ENCODE measurements at regions of chr7 and their contacts with region 1.

Region 1: DNA sequence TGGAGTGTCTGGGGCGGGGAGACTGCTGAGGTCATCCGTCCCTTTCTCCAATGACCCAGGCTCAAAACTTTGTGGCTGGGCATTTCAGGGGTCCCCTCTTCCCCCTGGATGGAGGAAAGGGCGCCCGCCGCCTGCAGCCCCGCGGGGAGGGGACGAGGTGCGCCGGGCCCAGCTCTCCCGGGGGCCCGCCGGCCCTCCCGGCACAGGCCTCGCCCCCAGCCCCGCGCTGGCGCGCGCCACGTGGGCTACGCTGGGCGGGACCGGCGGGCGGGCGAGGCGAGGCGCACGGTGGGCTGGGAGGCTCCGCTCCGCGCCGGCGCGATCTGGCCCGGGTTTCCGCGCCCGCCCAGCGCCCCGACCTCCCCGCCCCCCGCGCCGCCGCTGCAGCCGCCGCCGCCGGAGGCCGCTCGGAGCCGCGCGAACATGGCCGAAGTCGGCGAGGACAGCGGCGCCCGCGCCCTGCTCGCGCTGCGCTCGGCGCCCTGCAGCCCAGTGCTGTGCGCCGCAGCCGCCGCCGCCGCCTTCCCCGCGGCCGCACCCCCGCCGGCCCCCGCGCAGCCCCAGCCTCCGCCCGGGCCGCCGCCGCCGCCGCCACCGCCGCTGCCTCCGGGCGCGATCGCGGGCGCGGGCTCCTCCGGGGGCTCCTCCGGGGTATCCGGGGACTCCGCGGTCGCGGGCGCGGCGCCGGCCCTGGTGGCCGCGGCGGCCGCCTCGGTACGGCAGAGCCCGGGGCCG is at the start of gene FOXK1:
- DNase-seq: peak; percentile 73 to 77
- H3K4me3 ChIP-seq: peak within 1 kb of the TSS; percentile 53 to 86 (median 61)
- H3K27ac ChIP-seq: peak within 1 kb of the TSS; percentile 93 to 97 (median 97)
- H3K4me1 ChIP-seq: peaks cover 18 to 26% of the 10 kb centered on the region in 2 donors
- H3K27me3 ChIP-seq: no peaks in the 10 kb centered on the region
- CTCF ChIP-seq: peak in 1 of 6 experiments; percentile 21
- POLR2A ChIP-seq: peak in 1 of 2 donors; percentile 73
- total RNA-seq, gene FOXK1: 15.0 to 33.0 (median 20.7) TPM

Region 2: DNA sequence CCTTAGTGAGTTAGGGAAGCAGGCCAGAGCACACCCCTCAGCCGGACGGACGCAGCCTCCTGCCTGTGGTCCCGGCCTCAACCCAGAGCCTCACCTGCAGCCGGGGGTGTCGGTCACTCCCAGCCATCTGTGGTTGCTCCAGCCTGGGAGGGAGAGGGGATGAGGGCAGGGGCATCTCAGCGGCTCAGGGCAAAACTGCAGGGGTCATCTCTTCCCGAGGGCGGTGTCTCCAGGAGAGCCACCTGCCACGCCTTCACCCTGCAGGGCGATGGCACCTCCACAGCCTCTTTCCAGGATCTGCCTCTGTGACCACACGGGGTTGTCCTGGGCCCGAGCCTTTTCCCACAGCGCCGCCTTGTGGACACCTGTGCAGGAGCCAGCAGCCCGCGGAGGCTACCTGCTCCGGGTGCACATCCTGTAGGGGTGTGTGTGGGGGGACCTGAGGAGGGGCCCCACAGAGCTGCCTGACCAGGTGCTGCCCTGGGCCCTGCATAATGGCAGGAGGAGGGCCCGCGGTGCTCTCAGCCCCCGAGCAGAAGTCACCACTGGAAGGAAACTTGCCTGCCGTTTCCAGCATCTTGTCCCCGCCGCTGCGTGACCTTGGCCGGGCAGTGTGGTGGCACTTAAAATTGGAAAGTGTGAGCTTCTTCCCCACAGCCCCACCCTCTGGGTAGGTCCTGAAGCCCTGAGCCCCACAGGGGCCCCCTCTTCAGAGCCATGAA is 71.8 kb after region 1 on chr7:
- intact Hi-C with region 1: loop called (anchors 5 kb)
- DNase-seq: peak; percentile 75 to 83
- H3K4me3 ChIP-seq: no peak overlapping the region
- H3K27ac ChIP-seq: no peak overlapping the region
- H3K4me1 ChIP-seq: peaks cover 0 to 6% of the 10 kb centered on the region in 2 donors
- H3K27me3 ChIP-seq: no peaks in the 10 kb centered on the region
- CTCF ChIP-seq: peak; percentile 67 to 93 (median 87)
- POLR2A ChIP-seq: no peak